ENCODE measurements at regions of chr5 and their contacts with region 1.

Region 1: GRCh38 chr5:923281-923873 is 30.7 kb downstream of the TRIP13 start:
- DNase-seq: no peak
- ATAC-seq: peak; percentile 100
- H3K4me3 ChIP-seq: no peak overlapping the region
- H3K27ac ChIP-seq: no peak overlapping the region
- H3K4me1 ChIP-seq: no peaks in the 10 kb centered on the region
- H3K27me3 ChIP-seq: no peaks in the 10 kb centered on the region
- CTCF ChIP-seq: peak; percentile 81 to 97 (median 92); a peak in 5 of 6 replicates
- EP300 ChIP-seq: no peak
- POLR2A ChIP-seq: no peak
- RAD21 ChIP-seq: peak; percentile 93

Region 2: DNA sequence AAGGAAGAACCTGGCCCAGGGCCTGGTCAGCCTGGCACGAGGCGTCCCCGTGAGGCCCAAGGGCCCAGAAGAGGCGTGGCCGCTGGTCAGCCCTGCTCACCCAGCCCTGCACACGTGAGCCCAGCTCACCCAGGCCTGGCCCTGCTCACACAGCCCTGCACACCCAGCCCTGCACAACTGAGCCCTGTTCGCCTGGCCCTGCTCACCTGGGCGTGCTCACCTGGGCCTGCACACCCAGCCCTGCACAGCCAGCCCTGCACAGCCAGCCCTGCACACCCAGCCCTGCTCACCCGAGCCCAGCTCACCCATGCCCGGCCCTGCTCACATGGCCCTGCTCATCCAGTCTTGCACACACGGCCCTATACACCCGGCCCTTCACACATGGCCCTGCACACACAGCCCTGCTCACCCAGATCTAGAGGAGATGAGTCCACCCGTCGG is 74.7 kb before region 1 on chr5:
- CTCF ChIA-PET with region 1: no interaction called
- POLR2A ChIA-PET with region 1: no interaction called
- RAD21 ChIA-PET with region 1: no interaction called
- SMC1A ChIA-PET with region 1: no interaction called
- in situ Hi-C with region 1: no loop called
- intact Hi-C with region 1: no loop called
- DNase-seq: no peak
- ATAC-seq: no peak
- H3K4me3 ChIP-seq: no peak overlapping the region
- H3K27ac ChIP-seq: no peak overlapping the region
- H3K4me1 ChIP-seq: no peaks in the 10 kb centered on the region
- H3K27me3 ChIP-seq: no peaks in the 10 kb centered on the region
- CTCF ChIP-seq: no peak
- EP300 ChIP-seq: no peak
- POLR2A ChIP-seq: no peak
- RAD21 ChIP-seq: no peak

Region 3: GRCh38 chr5:947626-948471 is 24.5 kb after region 1 on chr5:
- CTCF ChIA-PET with region 1: interaction called, 6 read pairs
- POLR2A ChIA-PET with region 1: no interaction called
- RAD21 ChIA-PET with region 1: interaction called, 3 read pairs
- SMC1A ChIA-PET with region 1: interaction called, 10 read pairs
- in situ Hi-C with region 1: no loop called
- intact Hi-C with region 1: no loop called
- DNase-seq: no peak
- ATAC-seq: peak; percentile 10; the same call in 2 of the 3 replicates
- H3K4me3 ChIP-seq: no peak overlapping the region
- H3K27ac ChIP-seq: no peak overlapping the region
- H3K4me1 ChIP-seq: no peaks in the 10 kb centered on the region; the same call in 1 of the 2 replicates
- H3K27me3 ChIP-seq: peaks cover 3 to 5% of the 10 kb centered on the region in 2 experiments; a peak in 2 of 4 replicates
- CTCF ChIP-seq: no peak
- EP300 ChIP-seq: no peak
- POLR2A ChIP-seq: no peak
- RAD21 ChIP-seq: no peak

Region 4: DNA sequence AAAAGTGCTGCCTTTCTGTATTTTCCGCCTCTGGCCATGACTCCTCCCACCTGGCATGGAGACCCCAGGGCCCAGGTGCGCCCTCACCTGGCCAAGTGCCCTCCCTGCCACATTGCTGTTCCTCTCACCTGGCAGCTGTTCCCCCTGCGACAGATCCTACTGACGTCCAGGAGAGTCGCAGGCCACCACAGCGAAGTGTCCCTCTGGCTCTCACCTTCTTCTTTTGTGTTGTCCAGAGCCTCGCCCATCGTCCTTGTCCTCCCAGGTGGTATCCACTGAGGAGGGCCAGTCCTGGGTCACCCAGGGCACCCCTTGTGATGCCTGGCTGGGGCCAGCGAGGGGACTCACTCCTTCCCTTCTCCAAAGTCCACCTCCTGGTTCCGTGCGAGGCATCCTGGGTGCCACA is 87.9 kb after region 1 on chr5:
- CTCF ChIA-PET with region 1: interaction called, 15 read pairs
- POLR2A ChIA-PET with region 1: no interaction called
- RAD21 ChIA-PET with region 1: interaction called, 6 read pairs
- SMC1A ChIA-PET with region 1: no interaction called
- in situ Hi-C with region 1: no loop called
- intact Hi-C with region 1: no loop called
- DNase-seq: no peak
- ATAC-seq: peak; percentile 70
- H3K4me3 ChIP-seq: no peak overlapping the region
- H3K27ac ChIP-seq: no peak overlapping the region
- H3K4me1 ChIP-seq: no peaks in the 10 kb centered on the region
- H3K27me3 ChIP-seq: peaks cover 2 to 3% of the 10 kb centered on the region in 2 experiments; a peak in 3 of 4 replicates
- CTCF ChIP-seq: peak; percentile 49 to 55 (median 53)
- EP300 ChIP-seq: no peak
- POLR2A ChIP-seq: no peak
- RAD21 ChIP-seq: peak; percentile 29

Region 5: DNA sequence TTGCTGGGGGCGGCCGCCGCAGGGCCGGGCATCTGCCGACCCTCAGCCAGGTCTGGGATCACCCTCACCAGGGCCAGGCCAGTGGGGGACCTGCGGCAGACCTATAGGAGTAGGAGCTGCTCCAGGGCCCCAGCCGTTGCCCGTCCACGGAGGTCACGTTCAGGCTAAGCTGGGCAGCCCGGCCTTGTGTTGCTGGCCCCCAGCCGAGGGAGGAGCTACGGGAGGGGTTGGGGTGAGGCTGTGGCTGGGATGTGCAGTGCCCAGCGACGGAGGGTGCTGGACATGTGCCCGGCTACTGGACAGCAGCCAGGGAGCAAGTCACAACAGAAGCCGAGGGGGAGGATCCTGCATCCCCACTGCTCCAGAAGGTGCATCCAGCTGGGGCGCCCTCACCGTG is 238.5 kb after region 1 on chr5:
- CTCF ChIA-PET with region 1: interaction called, 20 read pairs
- POLR2A ChIA-PET with region 1: no interaction called
- RAD21 ChIA-PET with region 1: interaction called, 12 read pairs
- SMC1A ChIA-PET with region 1: interaction called, 11 read pairs
- in situ Hi-C with region 1: no loop called
- intact Hi-C with region 1: loop called (anchors 1 kb)
- DNase-seq: no peak
- ATAC-seq: no peak
- H3K4me3 ChIP-seq: no peak overlapping the region
- H3K27ac ChIP-seq: no peak overlapping the region
- H3K4me1 ChIP-seq: no peaks in the 10 kb centered on the region
- H3K27me3 ChIP-seq: peaks cover 0 to 2% of the 10 kb centered on the region in 2 experiments; a peak in 3 of 4 replicates
- CTCF ChIP-seq: no peak
- EP300 ChIP-seq: no peak
- POLR2A ChIP-seq: no peak
- RAD21 ChIP-seq: no peak

Region 6: DNA sequence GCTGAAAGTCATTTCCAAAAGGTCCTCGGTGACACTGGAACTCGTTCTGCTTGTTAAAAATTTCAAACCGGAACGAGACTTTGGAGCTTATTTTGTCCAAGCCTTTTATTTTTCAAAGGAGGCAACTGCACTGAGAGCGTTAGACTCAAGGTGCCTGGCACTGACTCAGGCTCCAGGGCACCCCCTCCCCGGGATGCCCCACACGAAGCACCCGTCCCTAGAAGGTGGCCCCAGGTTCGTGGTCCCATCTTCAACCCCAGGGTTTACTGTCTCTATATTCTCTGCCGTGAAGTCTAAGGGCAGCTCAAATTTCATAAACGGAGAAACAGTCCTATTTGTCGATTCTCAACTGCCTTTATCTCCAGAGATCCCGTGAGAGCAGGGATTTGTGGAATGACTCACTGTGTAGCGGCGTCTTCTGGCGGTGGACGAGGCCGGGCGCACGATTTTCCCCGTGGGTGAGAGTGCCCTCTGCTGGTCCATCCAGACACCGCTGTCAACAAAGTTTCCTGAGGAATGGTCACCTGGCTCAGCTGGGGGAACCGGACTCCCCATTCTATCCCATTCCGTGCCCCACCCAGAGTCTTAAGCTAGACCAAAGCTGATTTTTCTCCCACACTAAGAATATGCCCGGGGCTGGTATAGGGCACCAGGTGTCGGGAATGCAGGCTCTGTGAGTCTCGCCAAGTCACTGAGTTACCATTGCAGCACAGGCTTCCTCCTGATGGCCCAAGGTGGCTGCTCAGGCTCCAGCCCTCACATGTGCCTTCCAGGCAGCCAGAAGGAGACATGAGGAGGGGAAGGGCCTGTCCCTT is 251.0 kb after region 1 on chr5:
- CTCF ChIA-PET with region 1: interaction called, 20 read pairs
- POLR2A ChIA-PET with region 1: no interaction called
- RAD21 ChIA-PET with region 1: interaction called, 5 read pairs
- SMC1A ChIA-PET with region 1: interaction called, 4 read pairs
- in situ Hi-C with region 1: no loop called
- intact Hi-C with region 1: loop called (anchors 2 kb)
- DNase-seq: no peak
- ATAC-seq: peak; percentile 80
- H3K4me3 ChIP-seq: no peak overlapping the region
- H3K27ac ChIP-seq: no peak overlapping the region
- H3K4me1 ChIP-seq: no peaks in the 10 kb centered on the region
- H3K27me3 ChIP-seq: no peaks in the 10 kb centered on the region
- CTCF ChIP-seq: peak; percentile 69 to 78 (median 71)
- EP300 ChIP-seq: no peak
- POLR2A ChIP-seq: no peak
- RAD21 ChIP-seq: peak; percentile 29; the same call in 1 of the 2 replicates

Measured in GM12878 (cell line).